ENCODE measurements at regions of chr4 and their contacts with region 1.

Region 1: DNA sequence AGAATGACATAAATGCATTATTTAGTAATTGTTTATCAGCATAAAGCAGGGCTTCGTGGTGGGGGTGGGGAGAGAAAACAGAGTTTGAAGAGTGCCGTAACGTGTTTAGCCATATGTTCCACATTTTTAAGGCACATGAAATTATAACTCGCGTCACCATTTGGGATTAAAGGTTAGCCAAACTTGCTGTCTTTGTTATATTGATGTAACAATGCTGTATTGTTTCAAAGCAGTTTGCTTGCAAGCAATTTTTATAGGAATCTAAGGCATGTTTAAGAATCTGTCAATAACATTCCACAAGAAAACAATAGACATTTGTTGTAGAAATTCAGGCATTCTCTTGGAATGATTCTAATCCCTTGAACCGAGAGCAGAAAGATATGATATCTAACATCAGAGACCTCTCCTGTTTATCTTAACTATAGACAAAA is 78.3 kb downstream of the CLDN22 start:
- DNase-seq: no peak
- ATAC-seq: no peak
- H3K4me3 Mint-ChIP-seq: no peak overlapping the region
- H3K27ac Mint-ChIP-seq: no peak overlapping the region
- H3K4me1 Mint-ChIP-seq: no peaks in the 10 kb centered on the region
- H3K27me3 Mint-ChIP-seq: peaks cover 10% of the 10 kb centered on the region
- CTCF ChIP-seq: no peak

Region 2: DNA sequence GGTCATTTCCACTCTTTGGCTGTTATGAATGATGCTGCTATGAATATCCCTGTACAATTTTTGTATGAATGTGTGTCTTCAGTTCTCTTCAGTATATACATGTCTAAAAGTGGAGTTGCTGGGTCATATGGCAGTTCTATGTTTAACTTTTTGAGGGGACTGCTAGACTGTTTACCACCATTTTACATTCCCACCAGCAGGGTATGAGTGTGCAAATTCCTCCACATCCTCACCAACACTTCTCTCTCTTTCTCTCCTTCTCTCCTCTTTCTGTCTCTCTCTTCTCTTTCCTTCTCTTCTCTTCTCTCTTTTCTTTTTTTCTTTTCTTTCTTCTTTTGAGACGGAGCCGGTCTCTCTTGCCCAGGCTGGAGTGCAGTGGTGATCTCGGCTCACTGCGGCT is 134.9 kb before region 1 on chr4:
- CTCF ChIA-PET with region 1: no interaction called
- POLR2A ChIA-PET with region 1: no interaction called
- intact Hi-C with region 1: no loop called
- DNase-seq: no peak
- ATAC-seq: no peak
- H3K4me3 Mint-ChIP-seq: no peak overlapping the region
- H3K27ac Mint-ChIP-seq: no peak overlapping the region
- H3K4me1 Mint-ChIP-seq: no peaks in the 10 kb centered on the region
- H3K27me3 Mint-ChIP-seq: peaks cover 22% of the 10 kb centered on the region
- CTCF ChIP-seq: no peak

Region 3: GRCh38 chr4:183256756-183257385 is 15.1 kb after region 1 on chr4:
- CTCF ChIA-PET with region 1: interaction called, 11 read pairs
- POLR2A ChIA-PET with region 1: no interaction called
- intact Hi-C with region 1: no loop called
- DNase-seq: peak; percentile 64
- ATAC-seq: peak; percentile 60
- H3K4me3 Mint-ChIP-seq: no peak overlapping the region
- H3K27ac Mint-ChIP-seq: no peak overlapping the region
- H3K4me1 Mint-ChIP-seq: no peaks in the 10 kb centered on the region
- H3K27me3 Mint-ChIP-seq: no peaks in the 10 kb centered on the region
- CTCF ChIP-seq: peak; percentile 68